ENCODE measurements at regions of chr14 and their contacts with region 1.

Region 1: DNA sequence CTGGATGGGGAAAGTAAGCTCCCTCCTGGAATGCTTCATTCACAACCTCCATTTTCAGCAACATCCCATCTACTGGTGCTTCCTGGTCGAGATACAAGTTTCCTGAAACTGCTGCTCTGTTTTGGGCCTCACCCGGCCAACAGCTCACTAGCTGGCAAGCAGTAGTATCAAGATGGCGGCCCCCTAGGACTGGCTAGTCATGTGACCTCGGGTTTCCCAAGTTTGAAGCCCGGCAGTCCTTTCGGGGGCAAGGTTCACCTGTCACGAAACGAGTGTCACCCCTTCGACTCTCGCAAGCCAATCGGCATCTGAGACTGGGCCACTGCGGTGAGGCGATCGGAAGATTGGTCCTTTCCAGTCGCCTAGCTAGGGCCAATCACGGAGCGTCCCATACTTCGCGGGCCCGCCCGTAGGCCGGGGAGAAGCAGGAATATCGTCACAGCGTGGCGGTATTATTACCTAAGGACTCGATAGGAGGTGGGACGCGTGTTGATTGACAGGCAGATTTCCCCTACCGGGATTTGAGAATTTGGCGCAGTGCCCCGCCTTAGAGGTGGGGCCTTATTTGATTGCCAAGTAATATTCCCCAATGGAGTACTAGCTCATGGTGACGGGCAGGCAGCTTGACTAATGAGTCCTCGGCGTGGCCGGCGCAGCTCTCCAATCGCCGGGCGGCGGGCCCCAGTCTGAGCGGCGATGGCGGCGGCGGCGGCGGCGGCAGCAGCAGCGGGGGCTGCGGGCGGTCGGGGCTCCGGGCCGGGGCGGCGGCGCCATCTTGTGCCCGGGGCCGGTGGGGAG is at the start of gene PABPN1:
- DNase-seq: peak; percentile 98
- ATAC-seq: peak; percentile 91
- H3K4me3 Mint-ChIP-seq: peak within 1 kb of the TSS; percentile 93
- H3K27ac Mint-ChIP-seq: peak within 1 kb of the TSS; percentile 95
- H3K4me1 Mint-ChIP-seq: peaks cover 25% of the 10 kb centered on the region
- H3K27me3 Mint-ChIP-seq: no peaks in the 10 kb centered on the region
- total RNA-seq, gene PABPN1: 237 to 338 TPM

Region 2: GRCh38 chr14:22955702-22956569 is 365.0 kb before region 1 on chr14:
- CTCF ChIA-PET with region 1: no interaction called
- POLR2A ChIA-PET with region 1: no interaction called
- intact Hi-C with region 1: loop called in 1 of 2 experiments (anchors 1 kb)
- DNase-seq: no peak
- ATAC-seq: no peak
- H3K4me3 Mint-ChIP-seq: peak overlapping the region; percentile 88
- H3K27ac Mint-ChIP-seq: peak overlapping the region; percentile 90
- H3K4me1 Mint-ChIP-seq: peaks cover 18% of the 10 kb centered on the region
- H3K27me3 Mint-ChIP-seq: no peaks in the 10 kb centered on the region

Region 3: DNA sequence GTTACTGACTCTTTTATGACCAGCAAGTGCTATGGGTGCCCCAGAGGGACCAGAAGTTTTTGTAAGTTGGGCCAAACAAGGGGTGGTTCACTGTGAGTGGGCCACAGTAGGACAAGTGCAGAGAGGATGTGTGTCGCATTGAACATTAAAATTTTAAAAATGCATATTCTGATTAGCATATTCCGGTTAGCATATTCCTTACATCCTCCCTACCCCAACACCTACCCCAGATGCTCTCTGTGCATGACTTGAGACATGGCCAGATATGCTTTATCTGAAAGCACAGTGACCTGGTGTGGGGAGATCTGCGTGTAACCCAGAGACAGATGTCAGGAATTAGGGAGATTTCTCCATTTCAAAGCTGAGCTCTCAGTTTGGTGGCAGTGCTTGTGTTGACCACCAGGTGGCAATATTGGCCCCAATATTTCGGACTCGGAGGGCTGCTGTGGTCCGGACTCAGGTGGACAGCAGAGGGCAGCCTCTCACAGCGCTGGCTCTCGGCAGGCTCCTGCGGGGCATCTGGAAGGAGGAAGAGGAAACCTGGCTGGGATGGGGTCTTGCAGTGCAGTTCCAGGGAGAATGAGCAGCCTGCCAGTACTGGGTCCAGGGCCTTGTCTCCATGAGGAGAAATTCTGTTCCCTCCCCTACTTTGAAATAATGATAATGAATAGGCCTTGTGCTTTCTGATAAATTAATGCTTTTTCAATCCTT is 200.3 kb before region 1 on chr14:
- CTCF ChIA-PET with region 1: interaction called, 13 read pairs
- POLR2A ChIA-PET with region 1: no interaction called
- intact Hi-C with region 1: no loop called
- DNase-seq: peak; percentile 91
- ATAC-seq: peak; percentile 93
- H3K4me3 Mint-ChIP-seq: no peak overlapping the region
- H3K27ac Mint-ChIP-seq: peak overlapping the region; percentile 68
- H3K4me1 Mint-ChIP-seq: peaks cover 47% of the 10 kb centered on the region
- H3K27me3 Mint-ChIP-seq: no peaks in the 10 kb centered on the region

Region 4: DNA sequence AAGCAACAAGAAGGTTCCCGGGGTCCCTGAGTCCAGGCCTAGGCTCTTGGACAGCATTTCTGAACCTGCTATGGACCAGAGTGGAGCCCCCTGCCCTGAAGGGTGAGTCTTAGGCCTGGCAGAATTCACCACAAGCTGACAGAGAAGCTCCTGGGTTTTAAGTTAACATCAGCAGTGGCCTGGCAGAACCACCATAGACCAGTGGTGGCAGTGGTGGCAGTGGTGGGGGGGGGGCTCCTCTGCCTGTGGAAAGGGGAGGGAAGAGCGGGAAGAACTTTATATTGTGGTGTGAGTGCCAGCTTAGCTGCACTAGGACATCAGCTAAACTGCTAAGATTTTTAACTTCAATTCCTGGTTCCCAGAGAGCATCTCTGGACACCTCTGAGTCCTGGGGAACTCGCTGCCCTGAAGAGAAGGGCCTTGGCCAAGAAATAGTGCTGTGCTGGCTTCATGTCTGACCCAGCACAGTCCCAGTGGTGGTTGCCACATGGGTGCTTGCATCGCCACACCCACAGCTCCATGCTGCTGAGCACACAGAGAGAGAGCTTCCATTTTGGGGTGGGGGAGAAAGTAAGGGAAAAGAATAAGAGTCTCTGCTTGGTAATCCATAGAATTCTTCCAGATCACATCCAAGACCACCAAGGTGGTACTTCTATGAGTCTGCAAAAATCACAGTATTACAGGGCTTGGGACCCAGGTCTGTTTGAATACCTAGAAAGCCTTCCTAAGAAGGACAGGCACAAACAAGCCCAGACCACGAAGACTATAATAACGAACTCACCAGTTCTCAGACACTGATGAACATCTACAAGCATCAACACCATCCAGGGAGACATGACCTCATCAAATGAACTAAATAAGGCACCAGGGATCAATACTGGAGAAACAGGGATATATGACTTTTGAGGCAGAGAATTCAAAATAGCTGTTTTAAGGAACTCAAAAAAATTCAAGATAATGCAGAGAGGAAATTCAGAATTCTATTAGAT is 103.6 kb before region 1 on chr14:
- CTCF ChIA-PET with region 1: no interaction called
- POLR2A ChIA-PET with region 1: no interaction called
- intact Hi-C with region 1: no loop called
- DNase-seq: no peak
- ATAC-seq: no peak
- H3K4me3 Mint-ChIP-seq: no peak overlapping the region
- H3K27ac Mint-ChIP-seq: no peak overlapping the region
- H3K4me1 Mint-ChIP-seq: no peaks in the 10 kb centered on the region
- H3K27me3 Mint-ChIP-seq: peaks cover 27% of the 10 kb centered on the region

Region 5: DNA sequence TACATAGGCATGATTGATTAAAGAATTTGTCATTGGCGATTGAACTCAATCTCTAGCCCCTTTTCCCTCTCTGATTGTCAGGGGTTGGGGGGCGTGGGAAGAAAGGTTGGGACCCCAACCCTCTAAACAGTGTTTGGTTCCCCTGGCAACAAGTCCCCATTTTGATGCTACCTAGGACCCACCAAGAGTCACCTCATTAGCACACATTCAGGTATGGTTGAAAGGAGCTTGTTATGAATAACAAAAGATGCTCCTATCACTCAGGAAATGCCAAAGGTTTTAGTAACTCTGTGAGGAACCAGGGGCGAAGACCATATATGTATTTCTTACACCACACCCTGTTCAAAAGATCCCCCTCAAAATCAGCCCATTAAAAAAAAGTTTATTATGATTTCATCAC is 69.0 kb before region 1 on chr14:
- CTCF ChIA-PET with region 1: no interaction called
- POLR2A ChIA-PET with region 1: no interaction called
- intact Hi-C with region 1: no loop called
- DNase-seq: no peak
- ATAC-seq: no peak
- H3K4me3 Mint-ChIP-seq: no peak overlapping the region
- H3K27ac Mint-ChIP-seq: no peak overlapping the region
- H3K4me1 Mint-ChIP-seq: no peaks in the 10 kb centered on the region
- H3K27me3 Mint-ChIP-seq: peaks cover 6% of the 10 kb centered on the region

Region 6: GRCh38 chr14:23379366-23380196 is 58.6 kb after region 1 on chr14:
- CTCF ChIA-PET with region 1: interaction called, 14 read pairs
- POLR2A ChIA-PET with region 1: no interaction called
- intact Hi-C with region 1: no loop called
- DNase-seq: peak; percentile 78
- ATAC-seq: peak; percentile 92
- H3K4me3 Mint-ChIP-seq: no peak overlapping the region
- H3K27ac Mint-ChIP-seq: no peak overlapping the region
- H3K4me1 Mint-ChIP-seq: no peaks in the 10 kb centered on the region
- H3K27me3 Mint-ChIP-seq: peaks cover 2% of the 10 kb centered on the region

Region 7: GRCh38 chr14:23567192-23568020 is 246.4 kb after region 1 on chr14 and contains the start of gene AP1G2:
- CTCF ChIA-PET with region 1: interaction called, 3 read pairs
- POLR2A ChIA-PET with region 1: no interaction called
- intact Hi-C with region 1: loop called in 1 of 2 experiments (anchors 1 kb)
- DNase-seq: peak; percentile 95
- ATAC-seq: peak; percentile 96
- H3K4me3 Mint-ChIP-seq: peak within 1 kb of the TSS; percentile 92
- H3K27ac Mint-ChIP-seq: peak within 1 kb of the TSS; percentile 95
- H3K4me1 Mint-ChIP-seq: peaks cover 23% of the 10 kb centered on the region
- H3K27me3 Mint-ChIP-seq: peaks cover 5% of the 10 kb centered on the region
- total RNA-seq, gene AP1G2: 162 to 166 TPM

Region 8: GRCh38 chr14:25006961-25007795 is 1686.2 kb after region 1 on chr14:
- CTCF ChIA-PET with region 1: no interaction called
- POLR2A ChIA-PET with region 1: no interaction called
- intact Hi-C with region 1: no loop called
- DNase-seq: no peak
- ATAC-seq: peak; percentile 26
- H3K4me3 Mint-ChIP-seq: no peak overlapping the region
- H3K27ac Mint-ChIP-seq: no peak overlapping the region
- H3K4me1 Mint-ChIP-seq: no peaks in the 10 kb centered on the region
- H3K27me3 Mint-ChIP-seq: peaks cover 16% of the 10 kb centered on the region

Measured in activated CD4-positive, alpha-beta T cell treated with anti-CD3 and anti-CD28 coated beads for 36 hours (primary cell).